A549 (cell line): ENCODE measurements at regions of chr1 and their contacts with region 1.

Region 1: DNA sequence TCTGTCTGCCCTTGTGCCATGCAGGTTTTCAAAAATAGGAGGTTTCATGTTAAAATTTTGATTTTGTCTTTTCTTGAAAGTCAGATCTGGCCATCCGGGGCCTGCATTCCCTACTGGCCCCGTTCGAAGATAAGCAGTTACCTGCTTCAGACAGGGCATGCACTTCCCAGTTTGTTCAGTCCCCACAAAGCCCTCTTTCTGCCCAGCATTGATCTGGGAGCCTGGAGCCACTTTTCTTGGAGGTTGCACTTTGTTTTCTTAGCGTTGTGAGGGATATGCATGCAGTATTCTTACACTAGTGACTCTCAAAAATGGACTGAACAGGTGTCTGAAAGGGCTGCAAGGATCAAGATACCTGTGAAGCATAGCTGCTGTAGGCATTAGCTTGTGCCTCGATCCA is 11.5 kb downstream of the MOV10 start:
- DNase-seq: no peak
- ATAC-seq: no peak
- H3K4me3 ChIP-seq: no peak overlapping the region
- H3K27ac ChIP-seq: no peak overlapping the region
- H3K4me1 ChIP-seq: no peaks in the 10 kb centered on the region
- CTCF ChIP-seq: no peak
- EP300 ChIP-seq: no peak
- POLR2A ChIP-seq: no peak
- RAD21 ChIP-seq: no peak

Region 2: DNA sequence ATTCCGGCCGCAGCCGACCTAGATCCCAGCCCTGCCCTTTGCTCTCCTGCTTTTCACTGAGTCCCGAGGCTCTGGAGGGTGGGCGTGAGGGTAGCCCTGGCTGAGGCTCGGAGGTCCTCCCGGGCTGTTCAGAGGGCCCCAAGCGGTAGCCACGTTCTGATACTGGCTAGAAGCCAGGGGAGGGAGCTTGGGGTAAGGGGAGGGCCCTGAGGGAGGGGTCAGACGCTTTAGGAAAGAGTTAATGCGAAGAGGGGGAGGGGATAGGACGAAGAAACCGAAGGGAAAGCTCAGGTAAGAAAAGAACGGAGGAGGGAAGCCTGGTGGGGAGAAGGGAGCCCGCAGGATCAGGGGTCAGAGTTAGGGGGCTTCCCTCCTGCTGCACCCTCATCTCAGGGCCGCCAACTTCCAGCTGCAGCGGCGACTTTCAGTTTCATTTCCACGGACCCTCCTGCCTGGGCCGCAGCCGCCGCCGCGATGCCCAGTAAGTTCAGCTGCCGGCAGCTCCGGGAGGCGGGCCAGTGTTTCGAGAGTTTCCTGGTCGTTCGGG is 11.4 kb before region 1 on chr1 and contains the start of gene MOV10:
- CTCF ChIA-PET with region 1: interaction called, 10 read pairs
- POLR2A ChIA-PET with region 1: no interaction called
- DNase-seq: peak; percentile 35 to 69
- ATAC-seq: peak; percentile 74 to 85
- H3K4me3 ChIP-seq: peak within 1 kb of the TSS; percentile 92
- H3K27ac ChIP-seq: peak within 1 kb of the TSS; percentile 94 to 97
- H3K4me1 ChIP-seq: peaks cover 11% of the 10 kb centered on the region; the same call in 2 of the 3 replicates
- CTCF ChIP-seq: no peak
- EP300 ChIP-seq: no peak
- POLR2A ChIP-seq: 0 out of 2 replicates have a peak, but pooled peaks have one; percentile 23
- RAD21 ChIP-seq: no peak
- polyA plus RNA-seq, gene MOV10: 27.3 and 28.3 TPM in 2 replicates

Region 3: GRCh38 chr1:112735752-112736151 is 49.8 kb after region 1 on chr1:
- CTCF ChIA-PET with region 1: no interaction called
- POLR2A ChIA-PET with region 1: no interaction called
- DNase-seq: peak; percentile 23 to 28
- ATAC-seq: peak; percentile 62 to 67; a peak in 4 of 6 replicates
- H3K4me3 ChIP-seq: no peak overlapping the region
- H3K27ac ChIP-seq: no peak overlapping the region
- H3K4me1 ChIP-seq: no peaks in the 10 kb centered on the region
- CTCF ChIP-seq: no peak
- EP300 ChIP-seq: no peak
- POLR2A ChIP-seq: no peak
- RAD21 ChIP-seq: no peak

Region 4: DNA sequence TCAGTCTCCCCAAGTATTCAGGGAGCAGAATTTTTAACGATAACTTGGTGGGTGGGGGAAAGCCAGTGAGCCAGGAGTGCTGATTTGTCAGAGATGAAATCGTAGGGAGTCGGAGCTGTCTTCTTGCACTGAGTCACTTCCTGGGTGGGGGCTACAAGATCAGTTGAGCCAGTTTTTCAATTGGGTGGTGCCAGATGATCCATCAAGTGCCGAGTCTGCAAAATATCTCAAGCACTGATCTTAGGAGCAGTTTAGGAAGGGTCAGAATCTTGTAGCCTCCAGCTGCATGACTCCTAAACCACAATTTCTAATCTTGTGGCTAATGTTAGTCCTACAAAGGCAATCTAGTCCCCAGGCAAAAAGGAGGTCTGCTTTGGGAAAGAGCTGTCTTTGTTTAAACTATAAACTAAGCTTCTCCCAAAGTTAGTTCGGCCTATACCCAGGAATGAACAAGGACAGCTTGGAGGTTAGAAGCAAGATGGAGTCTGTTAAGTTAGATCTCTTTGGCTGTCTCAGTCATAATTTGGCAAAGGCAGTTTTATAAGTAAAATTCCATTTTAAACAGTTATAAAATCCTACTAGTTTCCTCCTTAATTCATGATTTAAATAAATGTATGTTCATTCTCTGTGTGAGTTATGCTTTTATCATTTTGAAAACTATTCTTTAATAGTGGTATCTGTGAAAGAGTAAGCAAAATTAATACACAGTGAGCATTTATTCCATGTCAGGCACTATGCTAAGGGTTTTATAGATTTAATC is 218.3 kb after region 1 on chr1:
- CTCF ChIA-PET with region 1: no interaction called
- POLR2A ChIA-PET with region 1: no interaction called
- DNase-seq: no peak
- ATAC-seq: no peak
- H3K4me3 ChIP-seq: no peak overlapping the region
- H3K27ac ChIP-seq: no peak overlapping the region
- H3K4me1 ChIP-seq: no peaks in the 10 kb centered on the region
- CTCF ChIP-seq: no peak
- EP300 ChIP-seq: no peak
- POLR2A ChIP-seq: no peak
- RAD21 ChIP-seq: no peak